Activated T-helper 1 cell treated with anti-CD3 and anti-CD28 coated beads, Interleukin-12 subunit alpha, Interleukin-12 subunit beta, Interleukin-2, Interleukin-4 antibody, amounts not matched to agents 30 ng/mL and 10 ng/mL and 1 ng/mL, durations not matched to agents 14 hours and 24 hours and 36 hours (primary cell): ENCODE measurements at regions of chr3 and their contacts with region 1.

Region 1: GRCh38 chr3:177197041-177197727 is at the start of gene TBL1XR1:
- DNase-seq: peak; percentile 86
- H3K4me3 Mint-ChIP-seq: peak within 1 kb of the TSS; percentile 98
- H3K27ac Mint-ChIP-seq: peak within 1 kb of the TSS; percentile 99
- H3K4me1 Mint-ChIP-seq: peaks cover 66% of the 10 kb centered on the region
- H3K27me3 Mint-ChIP-seq: no peaks in the 10 kb centered on the region
- total RNA-seq, gene TBL1XR1: 184 and 190 TPM in 2 replicates

Region 2: GRCh38 chr3:177050501-177051237 is 146.5 kb before region 1 on chr3:
- intact Hi-C with region 1: loop called (anchors 1 kb)
- DNase-seq: no peak
- H3K4me3 Mint-ChIP-seq: no peak overlapping the region
- H3K27ac Mint-ChIP-seq: no peak overlapping the region
- H3K4me1 Mint-ChIP-seq: peaks cover 11% of the 10 kb centered on the region
- H3K27me3 Mint-ChIP-seq: no peaks in the 10 kb centered on the region

Region 3: GRCh38 chr3:177185035-177185574 is 12.1 kb before region 1 on chr3:
- intact Hi-C with region 1: loop called (anchors 1 kb)
- DNase-seq: no peak
- H3K4me3 Mint-ChIP-seq: no peak overlapping the region
- H3K27ac Mint-ChIP-seq: peak overlapping the region; percentile 10
- H3K4me1 Mint-ChIP-seq: peaks cover 36% of the 10 kb centered on the region
- H3K27me3 Mint-ChIP-seq: no peaks in the 10 kb centered on the region

Region 4: GRCh38 chr3:177345049-177345972 is 148.1 kb after region 1 on chr3:
- intact Hi-C with region 1: loop called (anchors 1 kb)
- DNase-seq: peak; percentile 68
- H3K4me3 Mint-ChIP-seq: peak overlapping the region; percentile 17
- H3K27ac Mint-ChIP-seq: peak overlapping the region; percentile 95
- H3K4me1 Mint-ChIP-seq: peaks cover 46% of the 10 kb centered on the region
- H3K27me3 Mint-ChIP-seq: no peaks in the 10 kb centered on the region

Region 5: DNA sequence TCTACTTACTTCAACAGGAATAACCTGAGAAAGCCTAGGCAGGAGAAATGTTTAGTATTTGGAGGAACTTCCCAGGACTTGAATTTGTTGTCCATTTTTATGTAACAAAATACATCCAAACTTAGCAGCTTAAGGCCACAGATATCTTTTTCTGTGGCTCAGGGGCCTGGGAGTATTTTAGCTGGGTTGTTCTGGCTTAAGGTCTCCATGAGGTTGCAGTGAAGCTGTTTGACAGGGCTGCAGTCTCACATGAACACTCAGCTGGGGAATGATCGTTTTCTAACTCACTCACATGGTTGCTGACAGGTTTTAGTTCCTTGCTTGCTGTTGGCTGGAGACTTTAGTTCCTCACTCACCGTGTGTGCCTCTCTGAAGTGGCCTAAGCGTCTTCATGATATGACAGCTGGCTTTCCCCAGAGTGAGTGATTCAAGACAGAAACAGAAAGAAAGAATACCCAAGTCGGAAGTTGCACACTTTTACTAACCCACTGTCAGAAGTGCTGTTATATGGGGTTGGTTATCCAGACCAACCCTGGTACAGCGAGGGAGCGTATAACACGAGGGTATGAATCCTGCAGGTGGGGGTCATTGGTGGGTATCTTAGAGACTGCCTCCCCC is 229.8 kb after region 1 on chr3:
- intact Hi-C with region 1: loop called (anchors 1 kb)
- DNase-seq: peak; percentile 65
- H3K4me3 Mint-ChIP-seq: peak overlapping the region; percentile 20
- H3K27ac Mint-ChIP-seq: peak overlapping the region; percentile 59
- H3K4me1 Mint-ChIP-seq: peaks cover 29% of the 10 kb centered on the region
- H3K27me3 Mint-ChIP-seq: peaks cover 16% of the 10 kb centered on the region

Region 6: GRCh38 chr3:177787279-177788041 is 590.3 kb after region 1 on chr3:
- intact Hi-C with region 1: loop called (anchors 1 kb)
- DNase-seq: no peak
- H3K4me3 Mint-ChIP-seq: no peak overlapping the region
- H3K27ac Mint-ChIP-seq: peak overlapping the region; percentile 34
- H3K4me1 Mint-ChIP-seq: peaks cover 14% of the 10 kb centered on the region
- H3K27me3 Mint-ChIP-seq: no peaks in the 10 kb centered on the region

Region 7: GRCh38 chr3:178001670-178002101 is 804.5 kb after region 1 on chr3:
- intact Hi-C with region 1: loop called (anchors 1 kb)
- DNase-seq: peak; percentile 21
- H3K4me3 Mint-ChIP-seq: peak overlapping the region; percentile 47
- H3K27ac Mint-ChIP-seq: peak overlapping the region; percentile 82
- H3K4me1 Mint-ChIP-seq: peaks cover 34% of the 10 kb centered on the region
- H3K27me3 Mint-ChIP-seq: no peaks in the 10 kb centered on the region